T-cell (primary cell): ENCODE measurements at regions of chr1 and their contacts with region 1.

Region 1: DNA sequence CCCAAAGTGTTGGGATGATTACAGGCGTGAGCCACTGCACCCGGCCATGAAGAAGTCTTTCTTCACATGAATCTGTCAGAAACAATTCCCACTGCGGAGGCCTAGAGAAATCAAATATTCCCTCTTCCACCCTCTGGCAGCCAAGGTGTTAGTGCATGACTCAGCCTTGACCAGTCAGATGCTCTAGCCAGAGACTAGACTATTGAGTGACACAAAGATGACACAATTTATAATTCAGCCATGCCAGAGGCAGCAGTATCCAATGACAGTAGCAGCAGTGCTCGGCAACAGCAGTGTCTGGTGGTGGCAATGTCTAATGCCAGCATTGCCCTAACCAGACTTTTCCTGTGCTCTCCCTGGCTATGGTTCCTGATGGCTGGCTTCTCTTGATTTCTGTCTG is 8.7 kb downstream of the CTXND2 start:
- DNase-seq: no peak
- ATAC-seq: no peak
- H3K4me3 ChIP-seq: no peak overlapping the region
- H3K4me3 Mint-ChIP-seq: no peak overlapping the region
- H3K27ac ChIP-seq: no peak overlapping the region
- H3K27ac Mint-ChIP-seq: no peak overlapping the region
- H3K4me1 ChIP-seq: peaks cover 1 to 4% of the 10 kb centered on the region in 2 experiments
- H3K4me1 Mint-ChIP-seq: peaks cover 4 to 12% (median 12%) of the 10 kb centered on the region in 3 donors
- H3K27me3 ChIP-seq: peaks cover 0 to 4% of the 10 kb centered on the region in 2 experiments
- H3K27me3 Mint-ChIP-seq: peaks cover 0 to 4% of the 10 kb centered on the region in 2 donors

Region 2: DNA sequence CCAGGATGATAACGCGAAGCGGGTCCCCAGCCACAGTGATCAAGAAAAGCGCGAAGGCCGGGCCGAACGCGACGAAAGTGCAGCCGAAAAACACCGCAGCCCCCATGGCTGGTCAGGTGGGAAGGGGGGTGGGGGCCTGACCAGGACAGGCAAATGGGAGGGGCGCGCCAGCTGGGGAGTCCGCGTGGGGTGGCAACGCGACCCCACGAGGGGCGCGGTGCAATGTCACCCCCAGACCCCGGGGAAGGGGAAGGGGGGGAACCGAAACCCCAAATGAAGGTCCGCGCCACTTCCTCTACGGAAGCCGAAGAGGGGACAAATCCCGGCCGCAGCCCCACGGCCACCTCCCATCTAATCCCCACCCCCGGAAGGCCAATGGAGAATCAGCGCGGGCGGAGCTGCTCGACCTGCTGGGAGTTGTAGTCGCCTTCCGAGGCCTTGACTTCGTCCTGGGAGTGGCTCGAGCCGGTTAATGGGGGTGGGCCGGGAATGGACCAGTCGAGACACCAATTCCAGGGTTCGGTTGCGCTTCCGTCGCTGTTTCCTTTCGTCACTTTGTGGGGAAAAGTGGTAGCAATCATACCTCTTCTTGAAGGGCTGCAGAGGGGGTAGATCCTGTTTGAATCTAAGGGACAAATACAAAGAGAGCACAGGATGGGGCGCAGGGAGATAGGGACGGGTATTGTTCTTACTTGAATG is 626.7 kb before region 1 on chr1 and contains the start of gene APH1A:
- CTCF ChIA-PET with region 1: no interaction called
- POLR2A ChIA-PET with region 1: no interaction called
- DNase-seq: peak; percentile 81 to 93 (median 86)
- ATAC-seq: peak; percentile 95 to 97 (median 96)
- H3K4me3 ChIP-seq: peak within 1 kb of the TSS; percentile 71 to 90
- H3K4me3 Mint-ChIP-seq: peak within 1 kb of the TSS; percentile 97 to 99 (median 99)
- H3K27ac ChIP-seq: peak within 1 kb of the TSS; percentile 95
- H3K27ac Mint-ChIP-seq: peak within 1 kb of the TSS; percentile 98 to 99
- H3K4me1 ChIP-seq: peaks cover 13 to 29% of the 10 kb centered on the region in 2 experiments
- H3K4me1 Mint-ChIP-seq: peaks cover 29 to 37% (median 30%) of the 10 kb centered on the region in 3 donors
- H3K27me3 ChIP-seq: no peaks in the 10 kb centered on the region
- H3K27me3 Mint-ChIP-seq: no peaks in the 10 kb centered on the region
- total RNA-seq, gene APH1A: 118 to 133 (median 124) TPM

Region 3: GRCh38 chr1:150842343-150842742 is 53.3 kb before region 1 on chr1:
- CTCF ChIA-PET with region 1: no interaction called
- POLR2A ChIA-PET with region 1: interaction called in 1 of 2 experiments, 11 read pairs
- DNase-seq: no peak
- ATAC-seq: no peak
- H3K4me3 ChIP-seq: no peak overlapping the region
- H3K4me3 Mint-ChIP-seq: peak overlapping the region in 1 of 3 donors; percentile 45
- H3K27ac ChIP-seq: no peak overlapping the region
- H3K27ac Mint-ChIP-seq: peak overlapping the region; percentile 24 to 81
- H3K4me1 ChIP-seq: peaks cover 4 to 25% of the 10 kb centered on the region in 2 experiments
- H3K4me1 Mint-ChIP-seq: peaks cover 33 to 45% (median 40%) of the 10 kb centered on the region in 3 donors
- H3K27me3 ChIP-seq: no peaks in the 10 kb centered on the region
- H3K27me3 Mint-ChIP-seq: no peaks in the 10 kb centered on the region